ENCODE measurements at regions of chr1 and their contacts with region 1.

Region 1: DNA sequence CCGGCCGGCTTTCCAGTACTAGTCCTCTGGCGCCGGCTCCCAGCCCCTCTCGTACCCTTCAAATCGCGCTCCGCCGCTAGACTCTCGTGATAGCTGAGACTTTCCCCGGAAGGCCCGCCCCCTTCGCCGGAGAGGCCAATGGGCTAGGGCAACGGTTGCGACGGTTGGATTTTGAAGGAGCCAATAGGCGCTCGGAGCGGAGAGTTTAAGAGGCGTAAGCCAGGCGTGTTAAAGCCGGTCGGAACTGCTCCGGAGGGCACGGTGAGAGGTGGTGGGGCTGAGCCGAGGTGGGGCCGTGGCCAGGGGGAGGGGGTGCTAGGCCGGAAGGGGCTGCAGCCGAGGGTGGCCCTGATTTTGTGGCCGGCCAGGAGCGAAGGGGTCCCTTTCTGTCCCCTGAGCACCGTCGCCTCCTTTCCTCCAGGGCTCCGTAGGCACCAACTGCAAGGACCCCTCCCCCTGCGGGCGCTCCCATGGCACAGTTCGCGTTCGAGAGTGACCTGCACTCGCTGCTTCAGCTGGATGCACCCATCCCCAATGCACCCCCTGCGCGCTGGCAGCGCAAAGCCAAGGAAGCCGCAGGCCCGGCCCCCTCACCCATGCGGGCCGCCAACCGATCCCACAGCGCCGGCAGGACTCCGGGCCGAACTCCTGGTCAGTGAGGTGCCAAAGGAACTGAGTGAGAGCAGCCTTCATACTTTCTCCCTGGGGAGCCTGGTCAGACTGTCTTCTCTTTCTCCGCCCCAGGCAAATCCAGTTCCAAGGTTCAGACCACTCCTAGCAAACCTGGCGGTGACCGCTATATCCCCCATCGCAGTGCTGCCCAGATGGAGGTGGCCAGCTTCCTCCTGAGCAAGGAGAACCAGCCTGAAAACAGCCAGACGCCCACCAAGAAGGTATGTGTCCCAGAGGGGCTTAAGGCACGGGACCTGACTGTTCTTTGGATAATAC is at the start of gene CDC20:
- DNase-seq: peak; percentile 98
- H3K4me3 ChIP-seq: peak within 1 kb of the TSS; percentile 74 to 83 (median 80)
- H3K27ac ChIP-seq: peak within 1 kb of the TSS; percentile 92
- H3K4me1 ChIP-seq: peaks cover 27% of the 10 kb centered on the region
- H3K27me3 ChIP-seq: no peaks in the 10 kb centered on the region
- CTCF ChIP-seq: no peak
- total RNA-seq, gene CDC20: 1.7 to 121 TPM

Region 2: DNA sequence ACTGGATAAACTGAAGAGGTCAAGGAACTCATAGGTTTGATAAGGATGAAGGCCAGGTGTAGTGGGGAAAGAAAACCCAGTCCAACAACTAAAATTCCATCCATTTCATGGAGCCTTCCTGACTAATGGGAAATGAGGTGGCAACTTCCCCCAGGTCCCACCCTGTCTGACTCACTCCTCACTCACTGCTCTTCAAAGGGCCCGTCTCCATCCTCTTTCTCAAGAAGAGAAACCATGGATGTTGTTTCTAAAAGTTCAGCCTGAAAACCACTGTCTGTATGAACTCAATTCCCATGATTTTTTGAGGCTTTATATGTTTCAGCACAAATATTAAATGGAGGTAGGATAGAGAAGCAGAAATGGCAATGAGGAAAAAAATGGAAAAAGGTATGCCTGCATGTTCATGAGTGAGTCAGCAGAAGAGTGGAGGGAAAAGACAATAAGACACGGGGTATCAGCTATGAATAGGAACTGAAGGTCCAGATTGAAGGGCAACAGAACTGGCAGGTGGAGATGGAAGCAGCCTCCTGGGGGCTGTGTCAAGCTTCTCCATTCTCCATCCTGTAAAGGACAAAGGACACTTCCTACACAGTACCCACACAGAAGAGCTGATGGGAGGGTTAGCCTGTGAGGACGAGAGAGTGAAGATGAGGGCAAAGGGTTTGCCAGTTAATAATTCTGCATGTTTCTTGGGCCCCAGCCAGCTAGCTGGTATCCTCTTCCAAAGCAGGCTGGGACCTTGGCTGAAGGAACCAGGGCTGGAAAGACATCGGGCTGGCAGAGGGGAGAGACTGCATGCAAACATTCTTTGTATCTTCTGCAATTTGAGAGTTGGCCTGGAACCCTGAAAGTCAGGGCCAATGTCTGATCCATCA is 14.3 kb after region 1 on chr1:
- CTCF ChIA-PET with region 1: interaction called, 11 read pairs
- dilution Hi-C with region 1: no loop called
- in situ Hi-C with region 1: no loop called
- intact Hi-C with region 1: no loop called
- DNase-seq: peak; percentile 92
- H3K4me3 ChIP-seq: no peak overlapping the region
- H3K27ac ChIP-seq: peak overlapping the region; percentile 80
- H3K4me1 ChIP-seq: peaks cover 41% of the 10 kb centered on the region
- H3K27me3 ChIP-seq: no peaks in the 10 kb centered on the region
- CTCF ChIP-seq: no peak

Region 3: DNA sequence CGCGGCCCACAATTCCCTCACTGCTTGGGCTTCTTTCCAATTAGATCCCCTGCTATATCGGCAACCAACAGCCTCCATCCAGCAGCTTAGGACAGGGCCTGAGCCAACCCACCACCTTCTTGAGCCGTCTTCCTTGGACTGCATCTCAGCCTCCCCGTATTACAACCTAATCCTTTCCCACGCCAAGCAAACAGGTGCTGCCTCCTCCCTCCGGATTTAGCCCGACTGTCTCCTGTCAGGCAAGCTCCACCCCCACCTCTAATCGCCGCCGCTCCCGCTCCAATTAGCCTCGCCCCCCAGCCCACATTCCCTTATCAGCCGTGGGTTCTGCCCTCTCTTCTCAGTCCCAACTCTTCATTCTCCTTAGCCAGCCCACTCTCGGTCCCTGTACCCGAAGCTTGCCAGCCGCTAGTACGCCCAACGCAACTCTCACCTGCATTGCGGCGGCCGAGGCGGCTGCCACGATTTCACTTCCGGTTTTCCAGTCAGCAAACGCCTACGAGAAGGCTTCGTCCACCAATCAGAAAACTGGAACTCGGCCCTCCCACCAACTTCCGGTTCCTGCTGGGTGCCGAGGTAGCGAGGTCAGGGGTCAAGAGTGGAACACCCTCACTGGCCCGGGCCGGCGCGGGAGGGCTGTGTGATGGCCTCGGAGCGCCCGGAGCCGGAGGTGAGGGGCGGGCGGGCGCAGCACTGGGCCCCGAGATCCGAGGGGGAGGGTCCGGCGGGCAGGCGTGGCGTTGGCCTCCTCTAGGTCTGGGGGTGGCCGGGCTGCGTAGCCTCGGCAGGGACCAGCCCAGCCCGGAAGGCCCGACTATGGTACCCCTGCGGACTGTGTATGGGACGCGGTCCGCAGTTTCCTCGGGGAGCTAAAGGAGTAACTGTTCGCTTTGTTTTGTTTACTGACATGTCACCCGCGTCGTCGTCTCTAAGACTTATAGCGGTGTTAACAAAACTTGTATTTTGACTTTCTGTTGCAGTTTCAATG is 30.6 kb after region 1 on chr1 and contains the starts of genes MED8 and SZT2:
- CTCF ChIA-PET with region 1: no interaction called
- dilution Hi-C with region 1: no loop called
- in situ Hi-C with region 1: no loop called
- intact Hi-C with region 1: loop called (anchors 2 kb)
- DNase-seq: peak; percentile 90
- H3K4me3 ChIP-seq: peak within 1 kb of the TSS; percentile 64 to 92 (median 87)
- H3K27ac ChIP-seq: peak within 1 kb of the TSS; percentile 61
- H3K4me1 ChIP-seq: peaks cover 11% of the 10 kb centered on the region
- H3K27me3 ChIP-seq: no peaks in the 10 kb centered on the region
- CTCF ChIP-seq: no peak
- total RNA-seq, gene MED8: 34.7 to 44.3 TPM
- total RNA-seq, gene SZT2: 31.2 to 50.1 TPM

Region 4: DNA sequence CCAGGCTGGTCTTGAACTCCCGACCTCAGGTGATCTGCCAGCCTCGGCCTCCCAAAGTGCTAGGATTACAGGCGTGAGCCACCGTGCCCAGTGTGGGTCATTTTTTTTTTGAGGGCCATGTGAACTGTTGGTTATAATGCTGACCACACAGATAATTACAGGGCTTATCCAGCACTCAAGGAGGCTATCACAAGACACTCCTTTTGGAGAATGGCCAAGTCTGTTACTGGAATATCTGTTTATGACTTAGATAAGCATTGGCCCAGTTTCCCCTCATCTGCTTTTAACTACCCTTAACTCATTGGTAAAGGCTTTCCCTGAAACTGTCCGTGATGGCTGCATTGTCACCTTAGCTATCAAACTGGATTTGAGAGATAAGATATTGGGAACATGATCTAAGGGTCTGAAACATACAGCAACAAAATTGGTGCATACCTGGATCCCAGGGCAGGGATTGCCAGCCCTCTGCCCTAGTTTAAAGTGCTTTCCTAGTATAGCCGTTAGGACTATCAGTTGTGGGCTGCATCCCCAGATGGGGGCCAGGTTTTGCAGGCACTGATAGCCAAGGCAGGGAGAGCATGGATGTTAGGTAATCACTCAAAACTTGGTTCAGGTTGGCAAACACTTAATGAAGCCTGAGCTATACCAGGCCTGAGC is 46.3 kb after region 1 on chr1:
- CTCF ChIA-PET with region 1: no interaction called
- dilution Hi-C with region 1: no loop called
- in situ Hi-C with region 1: no loop called
- intact Hi-C with region 1: no loop called
- DNase-seq: no peak
- H3K4me3 ChIP-seq: no peak overlapping the region
- H3K27ac ChIP-seq: no peak overlapping the region
- H3K4me1 ChIP-seq: peaks cover 6% of the 10 kb centered on the region
- H3K27me3 ChIP-seq: no peaks in the 10 kb centered on the region
- CTCF ChIP-seq: no peak

Measured in mammary epithelial cell (primary cell).